WTC11 (cell line): ENCODE measurements at regions of chr12 and their contacts with region 1.

Region 1: DNA sequence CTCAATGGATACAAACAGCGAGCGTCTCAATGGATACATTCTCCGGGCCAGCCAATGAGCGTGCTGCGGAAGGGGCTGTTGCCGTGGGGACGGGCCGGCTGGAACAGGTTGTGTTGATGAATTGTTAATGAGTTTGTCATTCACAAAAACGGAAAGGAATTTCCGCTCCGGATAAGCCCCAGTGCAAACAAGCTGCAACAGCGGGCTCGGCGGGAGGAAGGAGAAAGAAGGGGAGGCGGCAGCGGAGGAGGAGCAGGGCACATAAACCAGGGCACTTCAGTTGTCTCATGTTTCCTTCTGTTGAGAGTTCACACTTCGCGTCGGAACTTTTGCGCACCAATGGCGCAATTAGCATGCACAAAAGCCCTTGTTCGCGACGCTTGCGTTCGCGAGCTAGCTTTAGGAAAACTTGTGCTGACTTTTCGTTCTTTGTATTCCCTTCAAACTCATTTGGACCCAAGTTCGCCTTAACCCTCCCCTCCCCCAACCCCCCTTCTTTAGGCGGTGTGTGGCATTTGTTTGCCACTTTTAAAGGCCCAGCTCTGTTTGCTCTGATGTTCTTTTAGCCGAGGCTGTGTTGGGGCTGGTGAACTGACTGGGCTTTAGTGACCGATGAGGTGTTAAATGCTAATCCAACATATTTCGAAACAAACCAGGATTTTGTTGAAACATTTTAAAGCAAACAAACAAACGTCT is at the start of gene DUSP6:
- DNase-seq: peak; percentile 96
- ATAC-seq: peak; percentile 70
- H3K4me3 Mint-ChIP-seq: peak within 1 kb of the TSS; percentile 97
- H3K27ac Mint-ChIP-seq: peak within 1 kb of the TSS; percentile 99
- H3K4me1 Mint-ChIP-seq: peaks cover 51% of the 10 kb centered on the region
- H3K27me3 Mint-ChIP-seq: peaks cover 36% of the 10 kb centered on the region
- CTCF ChIP-seq: no peak
- total RNA-seq, gene DUSP6: 136 to 245 TPM (median 141 TPM) in 3 replicates

Region 2: DNA sequence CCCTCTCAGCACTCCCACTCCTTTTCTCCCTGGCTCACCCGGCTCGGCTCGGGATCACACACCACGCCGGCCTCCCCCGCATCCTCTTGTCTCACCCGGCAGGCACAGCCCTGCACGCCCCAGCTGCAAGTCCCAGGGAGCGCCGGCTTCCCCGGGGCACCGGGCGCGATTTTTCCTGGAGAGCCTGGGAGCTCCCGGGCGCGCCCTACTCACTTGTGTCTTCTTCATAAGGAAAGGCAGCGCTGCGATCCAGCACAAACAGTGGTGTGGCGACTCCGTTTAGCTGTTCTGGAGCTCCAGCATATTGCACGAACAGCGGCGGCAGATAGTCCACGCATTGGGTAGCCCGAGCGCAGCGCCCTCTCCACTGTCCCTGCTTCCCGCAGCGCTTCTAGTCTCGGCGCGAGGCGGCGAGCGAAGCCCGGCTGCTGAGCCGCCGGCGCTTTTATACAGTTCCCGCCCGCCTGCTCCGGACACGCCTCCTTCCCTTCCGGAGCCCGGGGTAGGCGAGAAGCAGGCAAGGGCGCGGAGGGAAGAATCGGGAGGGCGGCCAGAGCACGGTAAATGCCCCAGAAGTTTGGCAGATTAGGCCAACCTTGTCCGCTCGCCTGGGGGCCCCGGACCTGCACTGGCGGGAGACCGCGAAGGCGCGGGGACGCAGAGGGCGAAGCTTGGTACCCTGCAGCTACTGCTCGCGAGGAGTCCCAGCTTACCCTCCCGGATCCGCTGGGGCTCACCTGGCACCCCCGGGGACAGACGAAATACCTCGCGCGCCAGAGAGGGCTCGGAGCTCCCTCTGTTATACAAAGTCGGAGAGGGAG is 772.4 kb before region 1 on chr12 and contains the start of gene KITLG:
- CTCF ChIA-PET with region 1: no interaction called
- POLR2A ChIA-PET with region 1: interaction called, 13 read pairs
- DNase-seq: peak; percentile 85
- ATAC-seq: peak; percentile 80
- H3K4me3 Mint-ChIP-seq: peak within 1 kb of the TSS; percentile 95
- H3K27ac Mint-ChIP-seq: peak within 1 kb of the TSS; percentile 15; the same call in 1 of the 2 replicates
- H3K4me1 Mint-ChIP-seq: peaks cover 55% of the 10 kb centered on the region
- H3K27me3 Mint-ChIP-seq: peaks cover 16% of the 10 kb centered on the region
- CTCF ChIP-seq: no peak
- total RNA-seq, gene KITLG: 8.1 to 12.5 TPM (median 8.9 TPM) in 3 replicates

Region 3: GRCh38 chr12:89384050-89384758 is 31.6 kb after region 1 on chr12:
- CTCF ChIA-PET with region 1: interaction called, 5 read pairs
- POLR2A ChIA-PET with region 1: interaction called, 18 read pairs
- DNase-seq: peak; percentile 54
- ATAC-seq: peak; percentile 93
- H3K4me3 Mint-ChIP-seq: no peak overlapping the region
- H3K27ac Mint-ChIP-seq: peak overlapping the region; percentile 95
- H3K4me1 Mint-ChIP-seq: peaks cover 52% of the 10 kb centered on the region
- H3K27me3 Mint-ChIP-seq: no peaks in the 10 kb centered on the region
- CTCF ChIP-seq: no peak

Region 4: GRCh38 chr12:89451841-89452251 is 99.2 kb after region 1 on chr12:
- CTCF ChIA-PET with region 1: interaction called, 20 read pairs
- POLR2A ChIA-PET with region 1: interaction called, 83 read pairs
- DNase-seq: peak; percentile 70
- ATAC-seq: peak; percentile 89
- H3K4me3 Mint-ChIP-seq: peak overlapping the region; percentile 51
- H3K27ac Mint-ChIP-seq: peak overlapping the region; percentile 96
- H3K4me1 Mint-ChIP-seq: peaks cover 71% of the 10 kb centered on the region
- H3K27me3 Mint-ChIP-seq: no peaks in the 10 kb centered on the region
- CTCF ChIP-seq: no peak

Region 5: DNA sequence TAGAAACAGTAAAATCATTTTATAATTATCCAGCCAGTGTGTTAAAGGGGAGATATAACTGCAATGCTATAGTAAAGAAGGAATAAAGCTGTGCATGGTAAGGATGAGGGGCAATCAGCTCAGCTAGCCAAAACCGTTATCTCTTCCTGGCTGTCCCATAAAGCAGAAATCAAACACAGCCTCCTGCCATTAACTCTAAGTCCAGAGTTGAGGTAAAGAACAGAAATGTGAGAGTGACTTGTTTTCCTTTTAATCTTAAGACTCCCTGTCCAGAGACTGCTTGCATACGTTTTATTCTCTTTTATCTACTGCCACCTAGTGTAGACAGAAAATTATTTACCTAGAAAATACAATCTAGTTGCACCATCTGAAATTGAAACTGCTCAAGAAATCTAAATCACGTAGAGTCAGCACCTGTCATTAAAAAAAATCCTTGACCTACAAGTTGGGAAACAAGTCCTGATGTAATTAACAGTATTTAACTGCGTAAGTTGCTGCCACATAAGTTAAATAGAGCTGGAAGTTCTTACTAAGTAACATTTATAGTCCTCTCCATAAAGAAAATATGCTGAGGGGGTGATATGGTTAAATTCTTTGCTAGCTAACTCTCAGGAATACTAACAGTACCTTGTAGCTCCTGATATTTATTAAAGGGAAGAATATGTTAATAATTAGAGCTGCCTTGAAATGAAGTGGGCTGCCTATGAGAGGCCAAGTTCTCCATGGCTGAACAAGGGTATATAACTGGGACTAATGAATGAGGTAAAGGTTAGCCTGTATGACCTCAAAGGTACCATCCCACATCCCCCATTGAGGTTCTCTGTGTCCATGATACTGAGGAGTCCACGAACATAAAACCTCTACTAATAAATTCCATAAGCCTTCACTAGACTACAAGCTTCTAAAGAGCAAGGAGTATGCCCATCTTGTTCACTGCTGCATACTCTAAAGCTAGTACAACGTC is 109.3 kb after region 1 on chr12:
- CTCF ChIA-PET with region 1: interaction called, 9 read pairs
- POLR2A ChIA-PET with region 1: interaction called, 15 read pairs
- DNase-seq: no peak
- ATAC-seq: peak; percentile 70
- H3K4me3 Mint-ChIP-seq: no peak overlapping the region
- H3K27ac Mint-ChIP-seq: no peak overlapping the region
- H3K4me1 Mint-ChIP-seq: peaks cover 25% of the 10 kb centered on the region
- H3K27me3 Mint-ChIP-seq: no peaks in the 10 kb centered on the region
- CTCF ChIP-seq: peak; percentile 49

Region 6: DNA sequence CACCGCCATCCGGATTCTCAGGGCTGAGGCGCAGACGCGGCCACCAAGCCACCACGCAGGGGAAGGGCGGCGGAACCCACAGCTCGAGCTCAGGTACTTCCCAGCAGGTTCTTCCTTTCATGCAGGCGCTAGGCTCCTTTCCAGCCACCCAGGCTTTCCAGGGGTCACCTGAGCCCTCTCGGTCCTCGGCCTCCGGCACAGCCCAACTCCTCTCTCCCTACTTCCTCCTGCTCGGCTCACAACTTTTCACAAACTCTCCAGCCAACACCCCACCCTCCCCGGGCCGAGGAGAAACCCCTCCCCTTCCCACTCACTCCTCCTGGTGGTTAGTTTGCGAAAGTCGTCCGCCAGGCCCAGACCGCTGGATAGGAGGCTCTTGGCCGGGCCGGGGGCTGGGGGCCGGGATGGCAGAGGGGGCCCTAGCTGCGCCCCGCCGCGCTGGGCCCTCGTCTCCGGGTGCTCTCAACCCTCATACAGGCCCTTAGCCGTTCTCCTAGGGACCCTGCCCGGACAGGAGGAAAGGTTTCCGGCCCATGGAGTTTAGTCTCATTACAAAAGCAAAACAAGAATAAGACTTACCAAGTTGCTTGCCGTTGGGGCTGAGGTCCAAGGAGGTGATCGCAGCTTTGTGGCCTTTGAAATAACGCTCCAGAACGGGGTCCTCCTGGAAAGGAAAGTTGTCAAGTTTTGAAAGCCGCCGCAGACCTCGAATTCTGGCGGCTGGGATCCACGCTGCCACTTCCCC is 172.1 kb after region 1 on chr12 and contains the start of gene GALNT4:
- CTCF ChIA-PET with region 1: interaction called, 5 read pairs
- POLR2A ChIA-PET with region 1: interaction called, 15 read pairs
- DNase-seq: peak; percentile 90
- ATAC-seq: peak; percentile 81
- H3K4me3 Mint-ChIP-seq: peak within 1 kb of the TSS; percentile 99
- H3K27ac Mint-ChIP-seq: peak within 1 kb of the TSS; percentile 92
- H3K4me1 Mint-ChIP-seq: peaks cover 23% of the 10 kb centered on the region
- H3K27me3 Mint-ChIP-seq: no peaks in the 10 kb centered on the region
- CTCF ChIP-seq: peak; percentile 31
- total RNA-seq, gene GALNT4: 2.9 to 3.9 TPM (median 3.2 TPM) in 3 replicates